Gastrocnemius medialis (tissue), 4 donors: ENCODE measurements at regions of chr7 and their contacts with region 1.

Region 1: GRCh38 chr7:77651573-77652162 is 44.6 kb upstream of the RSBN1L start:
- DNase-seq: no peak
- ATAC-seq: peak in 1 of 2 donors; percentile 39
- H3K4me3 ChIP-seq: no peak overlapping the region
- H3K27ac ChIP-seq: no peak overlapping the region
- H3K4me1 ChIP-seq: no peaks in the 10 kb centered on the region
- H3K27me3 ChIP-seq: no peaks in the 10 kb centered on the region
- CTCF ChIP-seq: peak; percentile 53 to 76 (median 65)
- POLR2A ChIP-seq: no peak

Region 2: DNA sequence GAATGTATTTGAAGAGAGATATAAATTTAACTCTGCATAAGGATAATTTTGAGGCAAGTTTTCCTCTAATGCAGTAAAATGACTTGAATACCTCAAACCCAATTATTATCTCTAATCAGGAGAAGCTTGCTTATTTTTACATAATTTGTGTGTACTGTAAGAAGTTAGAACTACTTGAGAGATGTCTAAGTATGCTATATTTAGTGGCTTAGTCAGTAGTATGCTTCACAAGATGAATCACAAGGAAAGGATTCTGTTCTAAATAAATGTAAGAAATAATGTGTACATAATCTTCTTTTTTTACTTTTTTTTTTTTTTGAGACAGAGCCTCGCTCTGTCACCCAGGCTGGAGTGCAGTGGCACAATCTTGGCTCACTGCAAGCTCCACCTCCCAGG is 160.6 kb after region 1 on chr7:
- in situ Hi-C with region 1: no loop called
- intact Hi-C with region 1: no loop called
- DNase-seq: no peak
- ATAC-seq: peak; percentile 92 to 96
- H3K4me3 ChIP-seq: no peak overlapping the region
- H3K27ac ChIP-seq: peak overlapping the region; percentile 56 to 81 (median 68)
- H3K4me1 ChIP-seq: peaks cover 23 to 33% of the 10 kb centered on the region in 2 donors
- H3K27me3 ChIP-seq: no peaks in the 10 kb centered on the region
- CTCF ChIP-seq: no peak
- POLR2A ChIP-seq: no peak

Region 3: DNA sequence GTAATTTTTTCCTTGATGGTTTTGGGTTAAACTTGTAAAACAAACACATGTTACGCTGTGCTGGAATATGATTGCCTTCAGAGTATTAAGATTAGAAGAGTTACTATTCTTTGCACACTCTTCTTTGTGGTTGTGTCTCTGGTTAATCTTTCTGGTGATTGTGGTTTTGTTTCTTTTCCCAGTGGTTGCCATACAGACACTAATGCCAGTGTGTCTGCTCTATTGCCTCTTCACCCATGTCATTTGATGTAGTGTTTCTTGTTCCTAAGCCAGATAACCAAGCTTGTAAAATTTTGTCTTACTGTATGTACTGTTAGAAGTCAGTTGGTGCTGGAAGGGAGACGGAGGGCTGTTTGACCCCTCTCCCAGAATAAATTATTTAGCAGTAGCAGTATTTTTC is 271.8 kb after region 1 on chr7:
- in situ Hi-C with region 1: loop called in 2 of 4 experiments (anchors 10 to 25 kb)
- intact Hi-C with region 1: no loop called
- DNase-seq: no peak
- ATAC-seq: no peak
- H3K4me3 ChIP-seq: no peak overlapping the region
- H3K27ac ChIP-seq: no peak overlapping the region
- H3K4me1 ChIP-seq: no peaks in the 10 kb centered on the region
- H3K27me3 ChIP-seq: no peaks in the 10 kb centered on the region
- CTCF ChIP-seq: no peak
- POLR2A ChIP-seq: no peak